ENCODE measurements at regions of chr15 and their contacts with region 1.

Region 1: DNA sequence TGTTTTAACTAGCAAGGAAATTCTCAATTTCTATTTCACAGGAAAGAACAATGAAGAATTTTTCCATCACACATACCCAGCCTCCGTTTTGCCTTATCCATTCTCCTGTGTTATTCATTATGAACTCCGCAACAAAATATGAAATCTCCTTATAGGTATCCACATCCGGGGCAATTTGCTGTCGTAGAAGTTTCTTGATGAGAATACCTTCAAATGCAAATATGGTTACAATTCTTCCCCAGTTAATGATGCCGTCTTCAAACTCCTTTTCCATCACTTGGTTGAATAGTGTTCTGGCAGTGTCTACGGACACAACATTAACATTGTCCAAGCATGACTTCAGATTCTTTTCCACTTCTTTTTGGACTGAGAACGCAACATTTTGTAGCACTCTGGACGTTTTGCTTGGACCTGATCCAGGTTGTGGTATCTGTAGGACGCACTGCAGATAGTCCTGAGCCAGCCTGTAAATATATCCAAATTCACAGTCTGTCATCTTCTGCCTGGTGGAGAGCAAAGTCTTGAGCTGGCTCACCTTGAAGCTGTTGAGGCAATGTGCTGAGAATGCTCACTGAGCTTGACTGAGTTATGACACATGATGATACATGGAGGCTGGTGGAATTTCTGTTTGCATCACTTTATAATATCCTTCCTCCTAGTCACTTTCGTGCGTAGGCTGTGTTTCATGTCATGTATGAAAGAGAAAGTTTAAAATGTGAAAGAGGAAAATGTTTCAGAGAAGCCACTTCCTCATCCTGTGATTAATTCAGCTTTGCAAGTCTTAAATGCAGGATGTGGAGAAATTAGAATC is at the start of gene BCL2A1:
- H3K4me3 Mint-ChIP-seq: peak within 1 kb of the TSS; percentile 9
- H3K27ac Mint-ChIP-seq: peak within 1 kb of the TSS; percentile 65
- H3K4me1 Mint-ChIP-seq: peaks cover 58% of the 10 kb centered on the region
- H3K27me3 Mint-ChIP-seq: peaks cover 53% of the 10 kb centered on the region

Region 2: GRCh38 chr15:79849784-79850183 is 121.0 kb before region 1 on chr15:
- intact Hi-C with region 1: no loop called
- H3K4me3 Mint-ChIP-seq: no peak overlapping the region
- H3K27ac Mint-ChIP-seq: no peak overlapping the region
- H3K4me1 Mint-ChIP-seq: peaks cover 5% of the 10 kb centered on the region
- H3K27me3 Mint-ChIP-seq: no peaks in the 10 kb centered on the region

Region 3: GRCh38 chr15:79901958-79902357 is 68.9 kb before region 1 on chr15:
- intact Hi-C with region 1: no loop called
- H3K4me3 Mint-ChIP-seq: no peak overlapping the region
- H3K27ac Mint-ChIP-seq: no peak overlapping the region
- H3K4me1 Mint-ChIP-seq: peaks cover 30% of the 10 kb centered on the region
- H3K27me3 Mint-ChIP-seq: peaks cover 21% of the 10 kb centered on the region

Region 4: GRCh38 chr15:79932447-79932846 is 38.4 kb before region 1 on chr15:
- intact Hi-C with region 1: loop called (anchors 5 kb)
- H3K4me3 Mint-ChIP-seq: no peak overlapping the region
- H3K27ac Mint-ChIP-seq: no peak overlapping the region
- H3K4me1 Mint-ChIP-seq: peaks cover 29% of the 10 kb centered on the region
- H3K27me3 Mint-ChIP-seq: peaks cover 77% of the 10 kb centered on the region

Region 5: DNA sequence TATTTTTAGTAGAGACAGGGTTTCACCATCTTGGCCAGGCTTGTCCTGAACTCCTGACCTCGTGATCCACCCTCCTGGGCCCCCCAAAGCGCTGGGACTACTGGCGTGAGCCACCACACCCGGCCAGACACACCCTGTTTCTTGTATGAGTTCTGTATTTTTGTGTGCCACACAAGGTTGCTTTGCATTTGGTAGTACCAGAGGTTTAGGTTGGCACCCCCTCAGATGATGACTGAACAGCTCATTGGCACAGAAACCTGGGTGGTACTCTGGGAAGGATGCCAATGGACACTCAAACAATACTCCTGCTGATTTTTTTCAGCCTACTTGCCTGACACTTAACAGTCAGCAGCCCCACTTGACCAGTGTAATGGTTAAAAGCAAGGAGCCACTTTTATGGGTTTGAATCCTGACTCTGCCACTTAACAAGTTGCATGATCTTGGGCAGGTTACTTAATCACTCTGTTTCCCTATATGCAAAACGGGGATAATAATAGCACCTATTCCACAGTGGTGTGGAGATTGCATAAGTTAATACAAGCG is 39.4 kb after region 1 on chr15:
- intact Hi-C with region 1: no loop called
- H3K4me3 Mint-ChIP-seq: no peak overlapping the region
- H3K27ac Mint-ChIP-seq: no peak overlapping the region
- H3K4me1 Mint-ChIP-seq: peaks cover 19% of the 10 kb centered on the region
- H3K27me3 Mint-ChIP-seq: no peaks in the 10 kb centered on the region